HEK293T (cell line): ENCODE measurements at regions of chr4 and their contacts with region 1.

Region 1: GRCh38 chr4:124334119-124334518 is 378.4 kb downstream of the ANKRD50 start:
- DNase-seq: peak; percentile 40

Region 2: GRCh38 chr4:124322234-124323065 is 11.7 kb before region 1 on chr4:
- CTCF ChIA-PET with region 1: no interaction called
- POLR2A ChIA-PET with region 1: no interaction called
- DNase-seq: peak; percentile 22

Region 3: GRCh38 chr4:125283707-125284279 is 949.7 kb after region 1 on chr4:
- CTCF ChIA-PET with region 1: interaction called, 14 read pairs
- POLR2A ChIA-PET with region 1: no interaction called
- DNase-seq: no peak